Aorta (tissue), 5 donors: ENCODE measurements at regions of chr3 and their contacts with region 1.

Region 1: GRCh38 chr3:37492977-37493471 is 318.6 kb upstream of the LRRFIP2 start:
- DNase-seq: no peak
- ATAC-seq: peak; percentile 87
- H3K4me3 ChIP-seq: no peak overlapping the region
- H3K27ac ChIP-seq: peak overlapping the region; percentile 78 to 91
- H3K4me1 ChIP-seq: peaks cover 0 to 3% of the 10 kb centered on the region in 2 donors
- H3K27me3 ChIP-seq: no peaks in the 10 kb centered on the region

Region 2: GRCh38 chr3:37456270-37456708 is 36.7 kb before region 1 on chr3:
- intact Hi-C with region 1: loop called in 1 of 2 experiments (anchors 1 kb)
- DNase-seq: peak; percentile 88 to 91
- ATAC-seq: peak; percentile 63
- H3K4me3 ChIP-seq: no peak overlapping the region
- H3K27ac ChIP-seq: peak overlapping the region; percentile 43 to 88
- H3K4me1 ChIP-seq: peaks cover 0 to 4% of the 10 kb centered on the region in 2 donors
- H3K27me3 ChIP-seq: no peaks in the 10 kb centered on the region

Region 3: DNA sequence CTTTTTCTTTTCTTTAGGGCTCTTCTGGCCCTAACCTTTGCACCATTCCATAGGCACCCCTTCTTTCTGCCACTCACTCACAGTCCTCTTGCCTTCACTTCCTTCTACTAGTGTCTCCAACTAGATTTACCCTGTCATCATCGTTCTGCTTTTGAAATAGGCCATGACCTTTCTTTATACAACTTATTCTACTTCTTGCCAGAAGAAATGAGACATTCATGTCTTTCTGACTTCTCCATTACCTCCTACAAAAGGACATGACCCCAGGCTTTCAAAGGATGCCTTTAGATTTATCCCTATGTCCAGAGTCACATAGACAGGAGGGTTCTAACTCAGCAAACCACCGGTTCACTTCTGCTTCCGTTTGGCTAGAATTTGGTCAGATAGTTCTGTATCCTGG is 17.7 kb after region 1 on chr3:
- intact Hi-C with region 1: loop called in 1 of 2 experiments (anchors 1 kb)
- DNase-seq: no peak
- ATAC-seq: no peak
- H3K4me3 ChIP-seq: no peak overlapping the region
- H3K27ac ChIP-seq: peak overlapping the region; percentile 78 to 81
- H3K4me1 ChIP-seq: peaks cover 6 to 13% of the 10 kb centered on the region in 2 donors
- H3K27me3 ChIP-seq: no peaks in the 10 kb centered on the region

Region 4: GRCh38 chr3:37608061-37608702 is 115.2 kb after region 1 on chr3:
- intact Hi-C with region 1: no loop called
- DNase-seq: no peak
- ATAC-seq: no peak
- H3K4me3 ChIP-seq: no peak overlapping the region
- H3K27ac ChIP-seq: peak overlapping the region; percentile 45 to 61
- H3K4me1 ChIP-seq: peaks cover 6 to 32% of the 10 kb centered on the region in 2 donors
- H3K27me3 ChIP-seq: no peaks in the 10 kb centered on the region